Colonic mucosa (tissue), 4 donors: ENCODE measurements at regions of chr19 and their contacts with region 1.

Region 1: DNA sequence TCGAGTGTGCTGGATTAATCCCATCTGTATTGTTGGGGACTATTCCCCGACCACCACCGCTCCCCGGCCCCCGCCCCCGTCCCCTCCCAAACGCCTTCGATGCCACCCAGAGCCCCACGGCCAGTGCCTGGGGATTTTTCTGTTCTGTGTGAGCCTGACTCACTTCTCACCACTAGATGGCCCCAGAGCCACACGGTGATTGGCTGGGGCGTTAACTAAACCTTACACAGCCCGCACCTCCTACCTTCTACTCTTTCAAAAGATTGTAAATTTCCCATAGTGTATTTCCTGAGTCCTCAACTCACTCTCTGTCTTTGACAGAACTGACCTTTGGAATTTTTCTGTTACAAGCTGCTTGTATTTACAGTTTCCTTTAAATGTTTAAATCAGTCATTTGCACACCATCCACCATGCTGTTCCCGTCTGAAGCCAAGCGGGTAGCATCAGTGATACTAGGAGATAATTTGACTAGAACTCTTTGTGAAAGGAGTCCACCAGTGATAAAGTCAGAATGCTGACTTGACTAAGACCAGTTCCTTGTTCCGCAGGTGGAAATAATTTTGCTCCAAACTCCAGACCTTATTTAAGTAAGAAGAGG is 61.4 kb downstream of the RFX2 start:
- DNase-seq: peak; percentile 87
- H3K4me3 ChIP-seq: no peak overlapping the region
- H3K27ac ChIP-seq: no peak overlapping the region
- H3K4me1 ChIP-seq: no peaks in the 10 kb centered on the region
- H3K27me3 ChIP-seq: no peaks in the 10 kb centered on the region
- CTCF ChIP-seq: peak; percentile 85

Region 2: DNA sequence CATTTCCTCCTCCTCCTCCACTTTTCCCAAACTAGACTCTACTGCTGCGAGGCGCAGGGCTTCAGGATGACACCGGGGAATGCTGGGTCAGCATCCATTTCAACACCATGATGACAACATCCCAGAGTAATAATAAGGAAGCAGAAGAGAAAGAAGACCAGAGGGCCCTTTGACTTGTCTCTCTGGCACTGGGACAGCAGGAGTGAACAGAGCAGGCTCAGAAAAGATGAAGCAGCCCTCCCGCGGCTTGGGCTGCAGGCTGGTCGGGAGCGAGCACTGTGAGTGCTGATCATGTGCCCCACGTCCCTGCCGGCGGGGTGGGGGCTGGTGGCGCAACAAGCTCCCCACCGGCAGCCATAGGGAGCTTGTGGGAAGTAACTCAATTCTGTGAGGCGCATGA is 101.5 kb before region 1 on chr19:
- intact Hi-C with region 1: no loop called
- DNase-seq: no peak
- H3K4me3 ChIP-seq: no peak overlapping the region
- H3K27ac ChIP-seq: peak overlapping the region; percentile 66
- H3K4me1 ChIP-seq: no peaks in the 10 kb centered on the region
- H3K27me3 ChIP-seq: no peaks in the 10 kb centered on the region
- CTCF ChIP-seq: no peak

Region 3: GRCh38 chr19:6125571-6125989 is 76.7 kb after region 1 on chr19:
- intact Hi-C with region 1: loop called (anchors 1 kb)
- DNase-seq: peak; percentile 69
- H3K4me3 ChIP-seq: no peak overlapping the region
- H3K27ac ChIP-seq: no peak overlapping the region
- H3K4me1 ChIP-seq: no peaks in the 10 kb centered on the region
- H3K27me3 ChIP-seq: no peaks in the 10 kb centered on the region
- CTCF ChIP-seq: peak; percentile 98

Region 4: DNA sequence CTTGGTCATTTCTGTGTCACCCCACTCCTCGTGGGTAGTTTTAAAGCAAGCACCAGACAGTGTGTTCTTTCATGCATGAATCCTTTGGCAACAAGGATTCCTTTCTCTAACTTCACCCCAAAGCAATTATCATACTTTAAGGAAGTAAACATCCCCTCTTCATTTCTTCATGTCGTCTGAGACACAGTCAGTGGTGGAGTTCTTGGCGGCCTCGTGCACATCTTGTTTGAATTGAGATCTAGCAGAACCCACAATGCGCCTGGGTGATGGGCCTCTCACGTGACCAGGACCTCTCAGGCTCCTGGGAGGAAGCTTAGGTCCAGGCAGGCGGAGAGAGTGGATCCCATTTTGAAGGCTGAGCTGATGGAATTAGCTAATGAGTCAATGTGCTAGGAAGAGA is 89.2 kb after region 1 on chr19:
- intact Hi-C with region 1: no loop called
- DNase-seq: no peak
- H3K4me3 ChIP-seq: no peak overlapping the region
- H3K27ac ChIP-seq: no peak overlapping the region
- H3K4me1 ChIP-seq: no peaks in the 10 kb centered on the region
- H3K27me3 ChIP-seq: no peaks in the 10 kb centered on the region
- CTCF ChIP-seq: no peak

Region 5: DNA sequence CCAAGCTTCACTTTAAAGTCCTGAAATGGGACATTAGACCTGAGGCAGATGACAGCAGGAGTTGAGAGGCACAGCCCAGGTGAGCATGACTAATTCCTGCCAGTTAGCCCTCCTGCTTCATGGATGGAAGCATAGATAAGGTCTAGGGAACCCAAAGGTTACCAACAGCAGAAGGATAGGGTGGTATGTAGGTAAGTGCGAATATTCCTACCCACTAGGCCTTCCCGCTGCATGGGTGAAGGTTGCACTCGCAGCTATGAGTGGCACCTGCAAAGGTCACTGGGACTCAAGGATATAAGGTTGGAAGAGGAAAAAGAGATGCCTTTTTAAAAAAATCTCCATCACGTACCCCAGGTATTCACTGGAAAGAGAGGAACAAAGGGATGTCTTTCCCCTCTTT is 243.1 kb after region 1 on chr19:
- intact Hi-C with region 1: loop called (anchors 10 kb)
- DNase-seq: no peak
- H3K4me3 ChIP-seq: no peak overlapping the region
- H3K27ac ChIP-seq: no peak overlapping the region
- H3K4me1 ChIP-seq: no peaks in the 10 kb centered on the region
- H3K27me3 ChIP-seq: no peaks in the 10 kb centered on the region
- CTCF ChIP-seq: no peak